Activated CD4-positive, alpha-beta T cell treated with anti-CD3 and anti-CD28 coated beads for 36 hours (primary cell): ENCODE measurements at regions of chr2 and their contacts with region 1.

Region 1: DNA sequence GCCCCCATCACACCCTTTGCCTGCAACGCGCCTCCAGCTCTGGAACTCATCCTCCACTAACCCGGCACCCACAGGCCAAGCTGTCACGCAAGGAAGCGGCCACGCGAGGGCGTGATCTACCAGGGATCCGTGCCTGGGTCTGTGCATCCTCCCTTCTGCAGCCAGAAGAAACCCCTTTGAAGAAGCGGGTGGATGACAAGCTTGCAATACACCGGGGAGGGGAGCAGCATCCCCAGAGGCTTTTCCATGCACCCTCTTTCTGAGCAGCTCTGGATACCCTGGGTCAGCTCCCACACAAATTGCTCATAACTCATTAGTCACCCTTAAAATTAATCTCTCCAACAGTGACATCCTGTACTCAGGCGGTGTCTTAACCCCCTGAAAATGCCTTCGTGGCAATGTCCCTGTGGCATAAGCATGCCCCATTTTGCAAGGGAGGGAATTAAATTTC is 47.6 kb downstream of the PDCL3 start:
- DNase-seq: peak; percentile 88
- ATAC-seq: peak; percentile 91
- H3K4me3 Mint-ChIP-seq: no peak overlapping the region
- H3K27ac Mint-ChIP-seq: no peak overlapping the region
- H3K4me1 Mint-ChIP-seq: no peaks in the 10 kb centered on the region
- H3K27me3 Mint-ChIP-seq: no peaks in the 10 kb centered on the region

Region 2: DNA sequence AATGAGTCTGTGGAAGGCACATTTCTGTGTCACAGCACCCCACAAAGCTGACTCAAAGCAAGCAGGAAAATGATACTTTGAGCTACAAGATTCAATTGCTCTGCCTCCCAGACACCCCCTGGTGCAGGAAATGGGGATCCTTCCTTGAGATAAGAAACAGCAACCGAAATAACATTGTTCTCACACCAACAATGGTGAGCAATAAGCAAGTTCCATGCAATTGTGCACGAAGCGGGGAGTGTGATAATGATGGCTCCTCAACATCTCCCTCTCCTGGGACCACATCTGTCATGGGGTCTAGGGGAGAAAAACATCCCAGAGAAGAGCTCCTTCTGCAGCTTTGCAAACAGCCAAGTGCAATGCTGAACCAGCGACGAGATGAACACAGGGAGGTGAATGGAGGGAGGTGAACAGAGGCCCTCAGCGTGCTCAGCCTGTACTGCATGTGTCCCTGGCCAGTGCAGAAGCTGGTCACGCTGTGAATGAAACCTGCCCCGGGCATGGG is 20.1 kb after region 1 on chr2:
- CTCF ChIA-PET with region 1: interaction called, 12 read pairs
- POLR2A ChIA-PET with region 1: interaction called, 3 read pairs
- intact Hi-C with region 1: no loop called
- DNase-seq: peak; percentile 68
- ATAC-seq: peak; percentile 86
- H3K4me3 Mint-ChIP-seq: no peak overlapping the region
- H3K27ac Mint-ChIP-seq: no peak overlapping the region
- H3K4me1 Mint-ChIP-seq: peaks cover 27% of the 10 kb centered on the region
- H3K27me3 Mint-ChIP-seq: no peaks in the 10 kb centered on the region

Region 3: DNA sequence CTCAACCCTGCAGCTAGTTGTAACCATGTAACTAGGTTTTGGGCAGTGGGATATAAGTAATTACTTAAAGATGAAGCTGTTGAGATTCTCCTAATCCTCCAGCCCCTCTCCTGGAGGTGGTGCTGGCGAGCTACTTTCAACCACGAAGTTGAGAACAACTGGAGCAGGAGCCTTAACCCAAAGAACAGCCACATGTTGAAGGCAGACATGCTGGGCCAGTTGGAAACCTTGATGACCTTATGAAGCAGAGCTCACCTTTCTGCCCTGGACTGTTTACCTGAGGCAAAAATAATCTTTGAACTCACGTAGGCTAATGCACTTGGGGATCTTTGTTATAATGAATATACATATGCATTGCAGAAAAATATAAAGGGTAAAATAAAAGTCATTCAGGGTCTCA is 119.9 kb after region 1 on chr2:
- CTCF ChIA-PET with region 1: interaction called, 12 read pairs
- POLR2A ChIA-PET with region 1: no interaction called
- intact Hi-C with region 1: loop called (anchors 2 to 10 kb)
- DNase-seq: peak; percentile 76
- ATAC-seq: peak; percentile 68
- H3K4me3 Mint-ChIP-seq: no peak overlapping the region
- H3K27ac Mint-ChIP-seq: no peak overlapping the region
- H3K4me1 Mint-ChIP-seq: peaks cover 5% of the 10 kb centered on the region
- H3K27me3 Mint-ChIP-seq: peaks cover 7% of the 10 kb centered on the region

Region 4: GRCh38 chr2:100984892-100985379 is 374.5 kb after region 1 on chr2:
- CTCF ChIA-PET with region 1: interaction called, 30 read pairs
- POLR2A ChIA-PET with region 1: no interaction called
- intact Hi-C with region 1: loop called (anchors 1 kb)
- DNase-seq: peak; percentile 89
- ATAC-seq: peak; percentile 85
- H3K4me3 Mint-ChIP-seq: no peak overlapping the region
- H3K27ac Mint-ChIP-seq: no peak overlapping the region
- H3K4me1 Mint-ChIP-seq: peaks cover 2% of the 10 kb centered on the region
- H3K27me3 Mint-ChIP-seq: peaks cover 2% of the 10 kb centered on the region

Region 5: DNA sequence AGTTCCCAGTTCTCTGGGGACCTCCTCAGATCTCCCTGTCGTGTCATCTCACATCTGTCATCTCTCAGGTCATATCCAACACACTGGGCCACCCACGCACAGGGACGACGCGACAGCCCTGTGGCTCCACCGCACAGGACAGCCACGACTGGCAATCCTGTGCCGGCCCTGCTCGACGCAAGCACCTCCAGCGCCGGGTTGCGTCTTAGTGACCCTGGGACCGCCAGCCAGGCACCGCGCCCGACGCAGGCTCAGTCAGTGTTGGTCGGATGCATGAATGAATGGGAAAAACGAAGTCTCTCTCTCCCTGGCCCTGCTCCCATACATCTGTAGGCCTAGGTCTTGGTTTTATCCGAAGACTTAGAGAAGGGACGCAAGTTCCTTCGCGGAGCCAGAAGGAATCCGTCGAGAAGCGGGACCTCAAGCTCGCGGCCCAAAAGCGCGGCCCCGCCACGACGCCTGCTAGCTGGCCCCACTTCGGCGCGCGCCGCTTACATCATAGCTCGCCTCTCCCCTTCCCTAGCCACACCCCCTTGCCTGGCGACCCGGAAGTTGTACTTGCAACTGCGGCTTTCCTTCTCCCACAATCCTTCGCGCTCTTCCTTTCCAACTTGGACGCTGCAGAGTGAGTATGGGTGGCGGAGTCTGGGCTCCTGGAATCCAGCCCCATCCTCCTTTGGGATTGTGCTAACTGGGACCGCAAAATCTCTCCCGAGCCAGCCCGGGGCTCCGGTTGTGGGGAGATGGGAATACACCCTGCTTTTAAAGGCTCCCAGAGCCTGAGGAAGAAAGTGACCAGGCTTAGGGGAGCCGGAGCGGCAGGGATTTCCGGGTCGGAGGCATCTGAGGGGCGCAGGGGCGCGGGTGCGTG is 391.5 kb after region 1 on chr2 and contains the start of gene RPL31:
- CTCF ChIA-PET with region 1: interaction called, 5 read pairs
- POLR2A ChIA-PET with region 1: no interaction called
- intact Hi-C with region 1: loop called in 1 of 2 experiments (anchors 5 kb)
- DNase-seq: peak; percentile 98
- ATAC-seq: peak; percentile 95
- H3K4me3 Mint-ChIP-seq: peak within 1 kb of the TSS; percentile 99
- H3K27ac Mint-ChIP-seq: peak within 1 kb of the TSS; percentile 97
- H3K4me1 Mint-ChIP-seq: peaks cover 41% of the 10 kb centered on the region
- H3K27me3 Mint-ChIP-seq: no peaks in the 10 kb centered on the region
- total RNA-seq, gene RPL31: 889 to 1,817 TPM

Region 6: DNA sequence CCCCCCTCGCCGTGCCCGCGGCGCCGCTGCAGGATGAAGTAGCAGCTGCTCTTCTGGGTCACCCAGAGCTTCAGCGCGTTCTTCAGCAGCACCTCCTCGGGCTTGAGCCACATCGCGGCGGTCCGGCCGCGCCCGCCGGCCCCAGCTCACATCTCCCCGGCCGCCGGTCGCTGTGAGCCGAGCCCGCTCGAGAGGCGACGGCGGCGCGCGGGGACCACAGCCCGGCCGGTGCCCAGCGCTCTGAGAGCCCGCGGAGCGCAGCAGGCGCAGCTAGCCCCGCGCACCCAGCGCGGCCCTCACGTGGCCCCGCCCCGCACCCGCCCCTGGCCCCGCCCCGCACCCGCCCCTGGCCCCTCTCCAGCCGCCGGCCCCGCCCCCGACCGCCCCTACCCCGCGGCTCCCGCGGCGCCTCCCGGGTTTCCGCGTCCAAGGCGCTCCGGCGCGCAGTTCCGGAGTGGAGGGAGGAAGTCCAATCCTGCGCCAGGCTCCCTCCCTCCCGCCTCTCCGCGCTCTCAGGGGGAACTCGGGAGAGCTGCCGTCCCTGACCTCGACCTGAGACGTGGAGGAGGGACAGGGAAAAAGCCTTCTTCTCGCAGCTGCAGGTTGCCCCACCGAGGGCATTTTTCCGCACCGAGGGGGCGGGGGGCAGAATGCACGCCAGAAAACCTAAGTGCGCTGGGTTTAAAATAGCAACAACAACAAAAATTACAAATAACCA is 540.9 kb after region 1 on chr2 and contains the start of gene TBC1D8:
- CTCF ChIA-PET with region 1: no interaction called
- POLR2A ChIA-PET with region 1: no interaction called
- intact Hi-C with region 1: loop called in 1 of 2 experiments (anchors 2 kb)
- DNase-seq: peak; percentile 82
- ATAC-seq: peak; percentile 93
- H3K4me3 Mint-ChIP-seq: peak within 1 kb of the TSS; percentile 71
- H3K27ac Mint-ChIP-seq: peak within 1 kb of the TSS; percentile 55
- H3K4me1 Mint-ChIP-seq: peaks cover 24% of the 10 kb centered on the region
- H3K27me3 Mint-ChIP-seq: peaks cover 21% of the 10 kb centered on the region
- total RNA-seq, gene TBC1D8: 3.3 to 3.4 TPM